Caco-2 (cell line): ENCODE measurements at regions of chr10 and their contacts with region 1.

Region 1: GRCh38 chr10:32005050-32005449 is 51.2 kb downstream of the KIF5B start:
- DNase-seq: peak; percentile 68 to 73
- H3K4me3 ChIP-seq: no peak overlapping the region
- H3K4me3 Mint-ChIP-seq: no peak overlapping the region
- H3K27ac Mint-ChIP-seq: no peak overlapping the region
- H3K4me1 ChIP-seq: no peaks in the 10 kb centered on the region; the same call in 1 of the 2 replicates
- H3K4me1 Mint-ChIP-seq: peaks cover 21% of the 10 kb centered on the region
- H3K27me3 ChIP-seq: no peaks in the 10 kb centered on the region
- H3K27me3 Mint-ChIP-seq: no peaks in the 10 kb centered on the region
- CTCF ChIP-seq: peak; percentile 78 to 83

Region 2: GRCh38 chr10:31961277-31962074 is 43.6 kb before region 1 on chr10:
- CTCF ChIA-PET with region 1: no interaction called
- POLR2A ChIA-PET with region 1: no interaction called
- intact Hi-C with region 1: loop called (anchors 2 kb)
- DNase-seq: no peak
- H3K4me3 ChIP-seq: no peak overlapping the region
- H3K4me3 Mint-ChIP-seq: no peak overlapping the region
- H3K27ac Mint-ChIP-seq: peak overlapping the region; percentile 94
- H3K4me1 ChIP-seq: peaks cover 46% of the 10 kb centered on the region
- H3K4me1 Mint-ChIP-seq: peaks cover 38% of the 10 kb centered on the region
- H3K27me3 ChIP-seq: no peaks in the 10 kb centered on the region
- H3K27me3 Mint-ChIP-seq: no peaks in the 10 kb centered on the region
- CTCF ChIP-seq: no peak